Heart right ventricle (tissue), 16 donors: ENCODE measurements at regions of chr5 and their contacts with region 1.

Region 1: DNA sequence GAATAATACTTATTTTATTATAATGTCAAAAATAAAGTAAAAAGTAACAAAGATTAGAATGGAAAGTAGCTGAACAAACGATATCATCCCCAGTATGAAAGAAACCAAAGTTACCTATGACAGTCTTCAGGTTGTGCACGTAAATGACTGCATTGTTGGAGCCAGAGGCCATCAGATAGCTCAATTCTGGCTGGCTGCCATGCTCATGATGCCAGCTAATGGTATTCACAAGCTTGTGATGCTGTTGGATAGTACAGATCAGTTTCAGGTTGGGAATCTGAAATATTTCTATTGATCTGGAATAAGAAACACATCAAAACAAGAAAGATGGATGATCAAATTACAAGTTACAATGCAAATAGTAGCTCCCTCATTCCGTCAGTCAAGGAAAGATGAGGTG is 21.1 kb downstream of the GEMIN5 start:
- DNase-seq: no peak
- ATAC-seq: no peak
- H3K4me3 ChIP-seq: no peak overlapping the region
- H3K27ac ChIP-seq: no peak overlapping the region
- H3K4me1 ChIP-seq: no peaks in the 10 kb centered on the region
- H3K27me3 ChIP-seq: no peaks in the 10 kb centered on the region
- CTCF ChIP-seq: no peak

Region 2: GRCh38 chr5:154654486-154655371 is 262.2 kb before region 1 on chr5:
- intact Hi-C with region 1: loop called in 1 of 10 experiments (anchors 10 kb)
- DNase-seq: no peak
- ATAC-seq: peak in 7 of 8 donors; percentile 10 to 66 (median 48)
- H3K4me3 ChIP-seq: peak overlapping the region in 6 of 10 donors; percentile 6 to 28 (median 18)
- H3K27ac ChIP-seq: peak overlapping the region; percentile 3 to 78 (median 61)
- H3K4me1 ChIP-seq: peaks cover 6 to 24% (median 22%) of the 10 kb centered on the region in 9 donors
- H3K27me3 ChIP-seq: no peaks in the 10 kb centered on the region
- CTCF ChIP-seq: no peak

Region 3: DNA sequence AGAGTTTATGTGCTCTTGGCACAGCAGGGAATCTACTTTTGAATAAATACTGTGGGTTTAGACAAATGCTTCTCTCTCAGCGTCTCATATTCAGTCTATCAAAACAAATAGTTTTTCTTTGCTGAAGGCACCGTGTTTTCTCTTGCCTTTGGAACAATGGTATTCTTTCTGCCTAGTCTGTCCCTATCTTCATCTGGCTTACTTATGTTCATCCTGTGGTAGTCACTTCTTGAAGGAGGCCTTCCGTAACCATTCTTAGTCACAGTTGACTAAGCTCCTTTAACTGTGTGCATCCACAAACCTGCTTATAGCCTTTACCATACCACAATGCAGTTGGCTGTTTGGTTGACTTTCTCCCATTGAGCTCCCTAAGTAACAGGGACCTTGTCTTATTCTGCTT is 115.8 kb before region 1 on chr5:
- intact Hi-C with region 1: loop called in 1 of 10 experiments (anchors 5 kb)
- DNase-seq: no peak
- ATAC-seq: no peak
- H3K4me3 ChIP-seq: no peak overlapping the region
- H3K27ac ChIP-seq: peak overlapping the region in 1 of 10 donors; percentile 11
- H3K4me1 ChIP-seq: peaks cover 0 to 27% (median 0%) of the 10 kb centered on the region in 9 donors
- H3K27me3 ChIP-seq: no peaks in the 10 kb centered on the region
- CTCF ChIP-seq: no peak

Region 4: GRCh38 chr5:154868702-154869101 is 48.2 kb before region 1 on chr5:
- intact Hi-C with region 1: loop called in 1 of 10 experiments (anchors 10 kb)
- DNase-seq: no peak
- ATAC-seq: peak in 5 of 8 donors; percentile 30 to 54 (median 45)
- H3K4me3 ChIP-seq: no peak overlapping the region
- H3K27ac ChIP-seq: peak overlapping the region in 1 of 10 donors; percentile 7
- H3K4me1 ChIP-seq: peaks cover 0 to 7% (median 0%) of the 10 kb centered on the region in 9 donors
- H3K27me3 ChIP-seq: no peaks in the 10 kb centered on the region
- CTCF ChIP-seq: peak in 3 of 9 donors; percentile 12 to 33 (median 19)

Region 5: DNA sequence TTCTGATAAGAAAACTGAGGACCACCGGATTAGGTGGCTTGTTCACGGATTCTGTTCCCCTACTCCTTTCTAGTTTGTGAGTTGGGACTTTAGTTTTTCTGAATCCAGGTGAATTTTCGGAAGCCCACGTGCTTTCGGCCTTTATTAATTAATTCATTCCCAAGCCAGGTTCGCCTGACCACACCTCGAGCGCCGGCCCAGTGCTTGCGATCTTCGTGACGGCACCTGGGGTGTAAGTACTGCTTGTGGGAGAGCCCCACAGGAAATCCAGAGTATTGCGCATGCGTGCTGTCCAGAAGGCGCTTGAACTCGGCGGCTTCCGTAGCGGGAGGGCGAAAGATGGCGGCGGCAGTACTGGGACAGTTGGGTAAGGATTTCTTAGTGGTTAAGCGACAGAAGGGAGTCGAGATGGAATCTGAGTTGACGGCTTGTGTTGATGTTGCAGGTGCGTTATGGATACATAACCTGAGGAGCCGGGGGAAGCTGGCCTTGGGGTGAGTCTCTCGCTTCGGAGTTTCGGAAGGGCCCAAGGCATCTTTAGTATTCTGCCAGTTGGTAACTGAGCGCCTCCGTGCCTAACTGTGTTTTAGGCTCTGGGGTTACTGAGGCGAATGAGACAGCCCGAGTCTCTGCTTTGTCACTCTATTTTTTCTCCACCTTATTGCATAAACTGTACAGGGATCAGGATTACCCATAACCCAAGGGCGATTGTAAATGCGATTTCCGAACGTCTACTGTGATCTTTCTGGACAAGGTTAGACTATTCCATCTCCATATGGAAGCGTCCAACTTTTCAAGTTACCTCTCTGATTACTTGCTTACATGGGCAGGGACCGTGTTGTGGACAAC is 24.1 kb after region 1 on chr5 and contains the start of gene MRPL22:
- intact Hi-C with region 1: no loop called
- DNase-seq: peak; percentile 90 to 95
- ATAC-seq: peak; percentile 57 to 92 (median 77)
- H3K4me3 ChIP-seq: peak within 1 kb of the TSS; percentile 55 to 90 (median 70)
- H3K27ac ChIP-seq: peak within 1 kb of the TSS; percentile 54 to 89 (median 79)
- H3K4me1 ChIP-seq: peaks cover 0 to 63% (median 49%) of the 10 kb centered on the region in 9 donors
- H3K27me3 ChIP-seq: no peaks in the 10 kb centered on the region
- CTCF ChIP-seq: peak in 1 of 9 donors; percentile 2
- total RNA-seq, gene MRPL22: 57.1 to 85.3 (median 70.5) TPM